Activated CD4-positive, alpha-beta T cell treated with anti-CD3 and anti-CD28 coated beads for 36 hours (primary cell): ENCODE measurements at regions of chr6 and their contacts with region 1.

Region 1: DNA sequence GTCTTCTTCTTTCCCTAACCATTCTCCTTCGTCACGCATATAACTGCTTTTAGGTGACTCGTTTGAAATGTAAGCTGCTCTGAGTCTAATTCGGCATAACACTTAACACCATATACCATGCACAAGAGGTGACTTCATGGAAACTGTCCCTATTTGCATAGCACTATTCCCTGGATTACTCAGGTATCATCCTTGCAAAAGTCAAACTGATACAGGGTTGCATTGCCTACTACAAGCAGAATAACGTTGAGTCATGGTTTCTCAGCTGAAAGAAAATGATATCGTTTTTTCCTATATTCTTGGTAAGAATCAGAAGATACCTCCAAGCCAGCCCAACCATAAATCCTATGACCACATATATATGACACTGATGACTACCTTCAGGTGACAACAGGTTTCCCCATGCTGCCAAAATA is 227.5 kb downstream of the ATXN1 start:
- DNase-seq: no peak
- ATAC-seq: peak; percentile 89
- H3K4me3 Mint-ChIP-seq: no peak overlapping the region
- H3K27ac Mint-ChIP-seq: peak overlapping the region; percentile 75
- H3K4me1 Mint-ChIP-seq: peaks cover 29% of the 10 kb centered on the region
- H3K27me3 Mint-ChIP-seq: no peaks in the 10 kb centered on the region

Region 2: GRCh38 chr6:16471222-16471909 is 62.4 kb before region 1 on chr6:
- CTCF ChIA-PET with region 1: no interaction called
- POLR2A ChIA-PET with region 1: interaction called, 5 read pairs
- intact Hi-C with region 1: loop called in 1 of 2 experiments (anchors 2 kb)
- DNase-seq: peak; percentile 36
- ATAC-seq: peak; percentile 45
- H3K4me3 Mint-ChIP-seq: no peak overlapping the region
- H3K27ac Mint-ChIP-seq: peak overlapping the region; percentile 60
- H3K4me1 Mint-ChIP-seq: peaks cover 79% of the 10 kb centered on the region
- H3K27me3 Mint-ChIP-seq: no peaks in the 10 kb centered on the region

Region 3: DNA sequence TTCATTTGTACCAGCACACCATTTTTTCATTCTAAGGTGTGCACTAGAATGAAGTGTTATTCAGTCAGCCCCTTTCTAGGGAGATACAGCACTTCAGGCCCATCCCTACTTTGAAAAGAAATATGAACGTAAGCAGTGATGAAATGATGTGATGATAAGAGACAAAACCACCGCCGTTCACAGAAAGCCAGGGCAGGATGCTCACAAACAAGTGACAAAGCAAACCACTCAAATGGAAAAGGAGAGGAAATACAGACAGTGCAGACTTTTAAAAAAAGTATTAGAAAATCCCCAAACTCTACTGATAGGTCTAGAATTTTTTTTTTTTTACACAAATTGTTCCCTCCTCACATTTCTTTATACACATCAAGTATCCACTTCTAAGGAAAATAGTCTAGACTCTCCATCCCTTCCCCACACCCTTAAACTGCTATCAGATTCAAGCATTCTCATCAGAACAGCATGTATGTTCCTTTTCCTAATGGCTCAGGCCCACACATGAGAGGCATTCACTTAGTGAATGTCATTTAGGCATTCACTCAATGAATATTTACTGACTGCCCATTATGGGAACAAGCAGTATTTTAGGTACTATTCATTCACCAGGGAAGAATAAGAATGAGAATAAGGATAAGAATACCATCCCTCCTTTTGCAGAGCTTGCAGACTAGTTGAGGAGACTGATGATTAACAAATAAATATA is 51.9 kb before region 1 on chr6:
- CTCF ChIA-PET with region 1: interaction called, 3 read pairs
- POLR2A ChIA-PET with region 1: no interaction called
- intact Hi-C with region 1: loop called in 1 of 2 experiments (anchors 2 kb)
- DNase-seq: peak; percentile 74
- ATAC-seq: peak; percentile 85
- H3K4me3 Mint-ChIP-seq: peak overlapping the region; percentile 10
- H3K27ac Mint-ChIP-seq: peak overlapping the region; percentile 92
- H3K4me1 Mint-ChIP-seq: peaks cover 81% of the 10 kb centered on the region
- H3K27me3 Mint-ChIP-seq: no peaks in the 10 kb centered on the region

Region 4: GRCh38 chr6:16591396-16592222 is 57.9 kb after region 1 on chr6:
- CTCF ChIA-PET with region 1: interaction called, 3 read pairs
- POLR2A ChIA-PET with region 1: no interaction called
- intact Hi-C with region 1: loop called (anchors 1 to 5 kb)
- DNase-seq: peak; percentile 61
- ATAC-seq: peak; percentile 87
- H3K4me3 Mint-ChIP-seq: no peak overlapping the region
- H3K27ac Mint-ChIP-seq: peak overlapping the region; percentile 78
- H3K4me1 Mint-ChIP-seq: peaks cover 19% of the 10 kb centered on the region
- H3K27me3 Mint-ChIP-seq: no peaks in the 10 kb centered on the region

Region 5: GRCh38 chr6:16690608-16691198 is 157.0 kb after region 1 on chr6:
- CTCF ChIA-PET with region 1: no interaction called
- POLR2A ChIA-PET with region 1: no interaction called
- intact Hi-C with region 1: loop called (anchors 2 to 5 kb)
- DNase-seq: peak; percentile 73
- ATAC-seq: peak; percentile 75
- H3K4me3 Mint-ChIP-seq: peak overlapping the region; percentile 34
- H3K27ac Mint-ChIP-seq: peak overlapping the region; percentile 88
- H3K4me1 Mint-ChIP-seq: peaks cover 88% of the 10 kb centered on the region
- H3K27me3 Mint-ChIP-seq: no peaks in the 10 kb centered on the region

Region 6: DNA sequence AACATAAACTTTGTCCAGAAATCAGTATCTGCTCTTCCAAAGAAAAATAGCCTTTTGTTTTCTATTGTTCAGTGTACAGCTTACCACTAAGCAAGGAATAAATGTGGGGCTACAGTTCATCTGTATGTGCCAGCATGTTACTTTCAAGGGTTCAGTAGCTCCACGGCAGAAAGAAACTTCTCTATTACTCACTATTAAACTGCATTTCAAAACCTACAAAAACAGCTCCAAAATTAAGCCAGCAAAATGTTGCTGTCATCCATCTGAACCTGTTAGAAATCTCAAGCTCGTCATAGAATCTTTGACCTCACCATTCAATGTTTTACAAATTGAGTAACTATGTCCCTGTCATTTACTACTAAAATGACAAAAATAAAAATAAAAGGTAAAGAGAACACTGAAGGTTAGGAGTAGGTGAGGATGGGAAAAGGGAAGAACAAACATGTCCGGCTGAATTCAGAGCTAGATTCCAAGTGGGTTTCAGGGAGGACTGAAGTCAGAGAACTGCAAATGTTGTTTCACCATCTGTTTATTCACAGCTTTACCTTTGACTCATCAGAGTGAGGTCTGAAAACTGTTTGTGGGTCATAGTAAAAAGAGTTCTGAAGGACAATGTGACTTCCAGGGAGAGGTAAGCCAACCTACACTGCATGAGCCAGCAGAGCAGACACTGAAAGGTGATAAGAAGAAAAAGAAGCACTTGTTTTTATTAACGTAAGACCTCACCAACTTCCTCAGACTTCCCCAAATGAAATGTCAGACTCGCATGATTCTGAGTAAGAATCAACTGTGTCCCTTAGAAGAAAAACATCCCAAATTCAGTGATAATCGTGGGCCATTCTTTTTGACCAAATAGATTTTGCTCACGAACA is 165.5 kb after region 1 on chr6:
- CTCF ChIA-PET with region 1: interaction called, 3 read pairs
- POLR2A ChIA-PET with region 1: no interaction called
- intact Hi-C with region 1: loop called in 1 of 2 experiments (anchors 5 kb)
- DNase-seq: peak; percentile 45
- ATAC-seq: peak; percentile 63
- H3K4me3 Mint-ChIP-seq: peak overlapping the region; percentile 69
- H3K27ac Mint-ChIP-seq: peak overlapping the region; percentile 95
- H3K4me1 Mint-ChIP-seq: peaks cover 75% of the 10 kb centered on the region
- H3K27me3 Mint-ChIP-seq: no peaks in the 10 kb centered on the region

Region 7: GRCh38 chr6:17015144-17015543 is 481.4 kb after region 1 on chr6:
- CTCF ChIA-PET with region 1: no interaction called
- POLR2A ChIA-PET with region 1: interaction called, 3 read pairs
- intact Hi-C with region 1: loop called in 1 of 2 experiments (anchors 1 kb)
- DNase-seq: peak; percentile 47
- ATAC-seq: peak; percentile 92
- H3K4me3 Mint-ChIP-seq: peak overlapping the region; percentile 36
- H3K27ac Mint-ChIP-seq: peak overlapping the region; percentile 38
- H3K4me1 Mint-ChIP-seq: peaks cover 17% of the 10 kb centered on the region
- H3K27me3 Mint-ChIP-seq: peaks cover 27% of the 10 kb centered on the region